Psoas muscle (tissue), 8 donors: ENCODE measurements at regions of chr9 and their contacts with region 1.

Region 1: GRCh38 chr9:69232135-69232534 is 58.1 kb downstream of the TJP2 start:
- DNase-seq: no peak
- ATAC-seq: no peak
- H3K4me3 ChIP-seq: no peak overlapping the region
- H3K27ac ChIP-seq: no peak overlapping the region
- H3K4me1 ChIP-seq: peaks cover 8% of the 10 kb centered on the region
- H3K27me3 ChIP-seq: no peaks in the 10 kb centered on the region
- CTCF ChIP-seq: no peak

Region 2: GRCh38 chr9:69279084-69279729 is 47.1 kb after region 1 on chr9:
- intact Hi-C with region 1: loop called in 1 of 2 experiments (anchors 10 kb)
- DNase-seq: no peak
- ATAC-seq: no peak
- H3K4me3 ChIP-seq: no peak overlapping the region
- H3K27ac ChIP-seq: no peak overlapping the region
- H3K4me1 ChIP-seq: no peaks in the 10 kb centered on the region
- H3K27me3 ChIP-seq: no peaks in the 10 kb centered on the region
- CTCF ChIP-seq: no peak

Region 3: DNA sequence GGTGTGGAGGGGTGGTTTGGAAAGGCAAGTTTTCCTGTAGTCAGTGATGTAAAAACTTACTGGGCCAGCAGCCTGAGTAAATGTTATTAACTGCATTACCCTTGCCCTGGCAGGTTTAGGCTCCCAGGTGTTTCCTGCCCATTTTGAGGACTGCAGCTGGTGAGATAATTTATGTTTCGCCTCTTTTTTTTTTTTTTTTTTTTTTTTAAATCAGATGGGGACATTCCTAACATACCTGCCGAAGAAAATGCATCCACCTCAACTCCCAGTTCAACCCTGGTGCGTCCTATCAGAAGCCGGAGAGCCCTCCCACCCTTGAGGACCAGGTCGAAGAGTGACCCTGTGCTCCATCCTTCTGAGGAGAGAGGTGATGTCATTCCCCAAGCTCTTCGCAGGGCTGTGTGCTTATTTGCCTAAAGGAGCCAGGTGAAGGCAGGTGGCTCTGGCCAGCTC is 153.5 kb after region 1 on chr9:
- intact Hi-C with region 1: loop called in 1 of 2 experiments (anchors 5 kb)
- DNase-seq: no peak
- ATAC-seq: no peak
- H3K4me3 ChIP-seq: no peak overlapping the region
- H3K27ac ChIP-seq: peak overlapping the region; percentile 68
- H3K4me1 ChIP-seq: peaks cover 61% of the 10 kb centered on the region
- H3K27me3 ChIP-seq: no peaks in the 10 kb centered on the region
- CTCF ChIP-seq: no peak